ENCODE measurements at regions of chr21 and their contacts with region 1.

Region 1: DNA sequence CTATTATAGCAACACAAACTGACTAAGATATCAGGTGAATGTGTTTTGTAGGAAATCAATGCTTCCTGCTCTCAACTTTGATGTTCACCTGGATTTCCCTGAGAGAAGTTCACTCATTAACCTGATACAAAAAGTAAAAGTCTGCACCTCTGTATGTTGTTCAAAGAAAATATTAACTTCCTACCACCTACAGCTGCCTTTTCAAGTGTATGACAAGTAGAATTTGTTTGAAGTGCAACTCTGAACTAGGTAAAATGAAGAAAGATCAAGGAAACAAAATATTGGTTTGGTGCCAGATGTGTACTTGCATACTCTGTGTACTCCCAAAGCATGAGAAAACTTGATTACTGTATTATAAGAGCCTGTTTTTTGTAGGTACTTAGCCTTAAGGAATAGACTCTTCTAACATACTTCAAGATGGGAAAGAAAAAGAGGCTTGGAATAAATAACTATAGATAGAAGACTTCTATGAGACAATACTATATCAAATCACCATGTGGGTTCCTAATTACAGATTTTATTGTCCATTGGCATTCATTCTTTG is 193.4 kb downstream of the APP start:
- DNase-seq: no peak
- H3K4me3 ChIP-seq: no peak overlapping the region
- H3K27ac ChIP-seq: peak overlapping the region in 1 of 3 donors; percentile 7
- H3K4me1 ChIP-seq: no peaks in the 10 kb centered on the region
- H3K27me3 ChIP-seq: no peaks in the 10 kb centered on the region
- CTCF ChIP-seq: no peak
- POLR2A ChIP-seq: no peak

Region 2: GRCh38 chr21:25997788-25998611 is 20.9 kb after region 1 on chr21:
- intact Hi-C with region 1: loop called (anchors 2 kb)
- DNase-seq: peak in 1 of 2 donors; percentile 23
- H3K4me3 ChIP-seq: no peak overlapping the region
- H3K27ac ChIP-seq: no peak overlapping the region
- H3K4me1 ChIP-seq: peaks cover 0 to 4% of the 10 kb centered on the region in 2 donors
- H3K27me3 ChIP-seq: no peaks in the 10 kb centered on the region
- CTCF ChIP-seq: no peak
- POLR2A ChIP-seq: no peak

Measured in thyroid gland (tissue), 4 donors.